Activated T-helper 2 cell treated with anti-CD3 and anti-CD28 coated beads, Interferon-gamma antibody, Interleukin-2, Interleukin-4, amounts not matched to agents 10 μg/mL and 5 μg/mL and 100 μg/mL, durations not matched to agents 14 hours and 24 hours and 36 hours (primary cell): ENCODE measurements at regions of chr3 and their contacts with region 1.

Region 1: DNA sequence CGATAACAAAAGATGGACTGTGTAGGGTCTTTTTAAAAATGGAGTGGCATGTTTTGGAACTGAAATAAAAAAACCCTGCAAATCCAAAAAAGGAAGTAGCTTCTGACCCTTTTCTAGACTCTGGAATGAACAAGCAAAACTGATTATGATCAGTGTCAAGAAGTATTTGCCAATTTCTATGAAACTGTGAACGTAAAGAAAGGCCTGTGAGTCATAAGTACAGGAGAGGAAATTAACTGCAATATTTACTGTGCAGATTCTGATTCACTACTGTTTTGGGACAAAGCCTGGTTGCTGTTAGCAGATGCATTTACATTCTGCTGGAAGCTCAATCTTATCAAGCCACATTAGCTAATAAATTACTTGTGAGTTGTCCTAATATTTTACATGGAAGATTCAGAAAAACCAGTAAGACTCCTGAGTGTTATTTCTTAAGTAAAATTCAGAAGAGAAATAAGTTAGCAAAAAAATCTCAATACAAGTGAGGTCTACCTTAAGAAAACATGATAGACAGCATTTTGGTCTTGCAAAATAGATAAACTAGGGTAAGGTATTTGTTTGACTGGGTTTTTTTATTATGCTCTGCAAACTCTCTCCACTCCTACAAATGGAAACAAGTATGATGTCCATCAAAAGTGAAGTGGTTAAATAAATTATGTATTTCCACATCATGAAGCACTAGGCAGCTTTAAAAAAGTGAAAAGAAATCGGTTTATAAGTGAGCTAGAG is 90.2 kb upstream of the LMOD3 start:
- DNase-seq: no peak
- H3K4me3 Mint-ChIP-seq: peak overlapping the region; percentile 26
- H3K27ac Mint-ChIP-seq: peak overlapping the region; percentile 89
- H3K4me1 Mint-ChIP-seq: peaks cover 49% of the 10 kb centered on the region
- H3K27me3 Mint-ChIP-seq: no peaks in the 10 kb centered on the region

Region 2: GRCh38 chr3:69250014-69250413 is 37.4 kb after region 1 on chr3:
- intact Hi-C with region 1: loop called (anchors 5 kb)
- DNase-seq: peak; percentile 58
- H3K4me3 Mint-ChIP-seq: peak overlapping the region; percentile 74
- H3K27ac Mint-ChIP-seq: peak overlapping the region; percentile 58
- H3K4me1 Mint-ChIP-seq: peaks cover 12% of the 10 kb centered on the region
- H3K27me3 Mint-ChIP-seq: peaks cover 8% of the 10 kb centered on the region

Region 3: GRCh38 chr3:69282181-69282580 is 69.6 kb after region 1 on chr3:
- intact Hi-C with region 1: loop called (anchors 1 kb)
- DNase-seq: no peak
- H3K4me3 Mint-ChIP-seq: peak overlapping the region; percentile 37
- H3K27ac Mint-ChIP-seq: peak overlapping the region; percentile 81
- H3K4me1 Mint-ChIP-seq: peaks cover 24% of the 10 kb centered on the region
- H3K27me3 Mint-ChIP-seq: no peaks in the 10 kb centered on the region